IMR-90 (cell line): ENCODE measurements at regions of chr15 and their contacts with region 1.

Region 1: DNA sequence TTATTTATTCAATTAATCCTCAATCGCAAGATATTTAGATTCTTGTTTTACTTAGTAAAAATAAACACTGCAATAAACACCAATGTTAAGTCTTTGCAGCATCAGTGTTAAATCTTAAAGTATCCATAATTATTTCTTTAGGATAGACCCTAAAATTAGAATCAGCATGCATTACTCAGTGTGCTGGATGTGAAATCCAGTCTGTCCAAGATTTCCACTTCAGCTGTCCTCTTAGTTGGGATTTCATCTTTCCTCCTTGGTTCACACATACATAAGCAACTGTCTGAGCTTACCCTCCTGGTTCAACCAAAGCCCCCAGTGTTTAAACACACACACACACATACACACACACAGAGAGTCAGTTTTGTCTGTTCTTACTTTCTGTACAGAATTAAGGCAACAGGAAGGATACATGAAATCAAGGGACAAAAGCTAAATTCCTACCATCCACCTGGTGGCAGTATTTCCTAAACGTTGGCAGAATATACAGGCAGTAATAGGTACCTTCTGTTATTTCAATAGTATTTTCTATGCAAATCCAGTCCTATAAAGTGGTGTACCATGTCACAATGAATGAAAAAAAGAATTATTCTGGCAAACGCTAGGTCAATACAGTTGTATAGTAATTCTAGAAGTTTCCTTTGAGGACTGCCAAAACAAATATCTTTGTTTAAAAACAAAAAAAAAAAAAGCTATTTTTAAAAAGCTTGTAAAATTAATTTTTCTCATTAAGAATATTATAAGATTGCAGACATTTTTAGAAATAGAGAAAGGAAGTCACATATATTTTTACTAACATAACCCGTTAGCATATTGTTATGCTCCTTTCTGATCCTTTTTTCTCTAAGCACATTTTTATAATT is 27.3 kb upstream of the DMXL2 start:
- DNase-seq: peak; percentile 79
- ATAC-seq: peak; percentile 90
- H3K4me3 ChIP-seq: no peak overlapping the region
- H3K27ac ChIP-seq: no peak overlapping the region
- H3K4me1 ChIP-seq: no peaks in the 10 kb centered on the region
- H3K27me3 ChIP-seq: peaks cover 7% of the 10 kb centered on the region
- CTCF ChIP-seq: peak; percentile 94
- POLR2A ChIP-seq: no peak
- RAD21 ChIP-seq: peak; percentile 97

Region 2: GRCh38 chr15:51759557-51760070 is 109.7 kb after region 1 on chr15:
- CTCF ChIA-PET with region 1: interaction called, 12 read pairs
- POLR2A ChIA-PET with region 1: no interaction called
- dilution Hi-C with region 1: no loop called
- in situ Hi-C with region 1: no loop called
- intact Hi-C with region 1: no loop called
- DNase-seq: peak; percentile 97
- ATAC-seq: peak; percentile 93
- H3K4me3 ChIP-seq: no peak overlapping the region
- H3K27ac ChIP-seq: peak overlapping the region; percentile 34; the same call in 1 of the 2 replicates
- H3K4me1 ChIP-seq: peaks cover 9% of the 10 kb centered on the region
- H3K27me3 ChIP-seq: no peaks in the 10 kb centered on the region
- CTCF ChIP-seq: 0 out of 2 replicates have a peak, but pooled peaks have one; percentile 7
- POLR2A ChIP-seq: no peak
- RAD21 ChIP-seq: no peak

Region 3: DNA sequence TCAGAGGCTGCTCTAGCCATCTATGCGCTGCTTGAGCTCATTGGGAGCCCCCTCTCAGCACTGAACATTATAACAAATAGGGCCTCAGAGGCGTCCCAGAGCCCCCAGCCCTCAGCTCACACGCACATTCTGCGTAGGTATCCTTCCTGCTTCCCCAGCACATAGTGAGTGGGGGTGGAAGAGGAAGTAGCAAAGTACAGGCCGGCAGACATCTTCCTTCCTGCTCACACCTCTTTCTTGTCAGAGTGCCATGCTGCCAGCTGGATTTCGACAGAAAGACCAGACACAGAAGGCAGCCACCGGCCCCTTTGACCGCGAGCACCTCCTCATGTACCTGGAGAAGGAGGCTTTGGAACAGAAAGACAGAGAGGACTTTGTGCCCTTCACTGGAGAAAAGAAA is 118.1 kb after region 1 on chr15:
- CTCF ChIA-PET with region 1: interaction called, 72 read pairs
- POLR2A ChIA-PET with region 1: no interaction called
- dilution Hi-C with region 1: no loop called
- in situ Hi-C with region 1: no loop called
- intact Hi-C with region 1: no loop called
- DNase-seq: no peak
- ATAC-seq: no peak
- H3K4me3 ChIP-seq: no peak overlapping the region
- H3K27ac ChIP-seq: no peak overlapping the region
- H3K4me1 ChIP-seq: no peaks in the 10 kb centered on the region
- H3K27me3 ChIP-seq: no peaks in the 10 kb centered on the region
- CTCF ChIP-seq: no peak
- POLR2A ChIP-seq: no peak
- RAD21 ChIP-seq: no peak

Region 4: GRCh38 chr15:51776952-51777574 is 127.2 kb after region 1 on chr15:
- CTCF ChIA-PET with region 1: interaction called, 72 read pairs
- POLR2A ChIA-PET with region 1: interaction called, 6 read pairs
- dilution Hi-C with region 1: no loop called
- in situ Hi-C with region 1: no loop called
- intact Hi-C with region 1: loop called (anchors 1 kb)
- DNase-seq: peak; percentile 77
- ATAC-seq: peak; percentile 87
- H3K4me3 ChIP-seq: no peak overlapping the region
- H3K27ac ChIP-seq: no peak overlapping the region
- H3K4me1 ChIP-seq: no peaks in the 10 kb centered on the region
- H3K27me3 ChIP-seq: no peaks in the 10 kb centered on the region
- CTCF ChIP-seq: peak; percentile 72
- POLR2A ChIP-seq: no peak
- RAD21 ChIP-seq: peak; percentile 71

Region 5: DNA sequence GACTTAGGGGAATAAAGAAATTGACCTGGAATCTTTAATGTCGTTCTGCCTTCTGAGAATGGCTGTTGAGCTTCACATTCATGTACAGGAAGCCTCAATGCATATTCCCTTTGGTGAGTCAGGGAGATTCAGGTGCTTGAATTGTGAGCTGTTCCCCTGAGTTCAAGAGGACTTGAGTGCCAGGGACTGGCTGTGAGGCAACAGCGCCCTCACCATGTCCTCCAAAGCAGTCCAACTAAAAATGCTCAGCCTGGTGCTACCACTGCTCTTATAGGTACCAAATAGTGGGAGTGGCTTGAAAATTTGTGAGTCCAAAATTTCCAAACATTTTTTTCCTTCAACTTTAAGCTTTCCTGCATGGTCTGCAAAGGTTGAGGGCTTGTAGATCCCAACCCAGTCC is 267.6 kb after region 1 on chr15:
- CTCF ChIA-PET with region 1: interaction called, 5 read pairs
- POLR2A ChIA-PET with region 1: no interaction called
- dilution Hi-C with region 1: no loop called
- in situ Hi-C with region 1: loop called (anchors 25 kb)
- intact Hi-C with region 1: loop called (anchors 10 kb)
- DNase-seq: peak; percentile 30
- ATAC-seq: no peak; the same call in 1 of the 2 replicates
- H3K4me3 ChIP-seq: no peak overlapping the region
- H3K27ac ChIP-seq: no peak overlapping the region
- H3K4me1 ChIP-seq: no peaks in the 10 kb centered on the region
- H3K27me3 ChIP-seq: no peaks in the 10 kb centered on the region
- CTCF ChIP-seq: peak; percentile 31
- POLR2A ChIP-seq: no peak
- RAD21 ChIP-seq: peak; percentile 36; the same call in 1 of the 2 replicates